Sigmoid colon (tissue), 7 donors: ENCODE measurements at regions of chr1 and their contacts with region 1.

Region 1: DNA sequence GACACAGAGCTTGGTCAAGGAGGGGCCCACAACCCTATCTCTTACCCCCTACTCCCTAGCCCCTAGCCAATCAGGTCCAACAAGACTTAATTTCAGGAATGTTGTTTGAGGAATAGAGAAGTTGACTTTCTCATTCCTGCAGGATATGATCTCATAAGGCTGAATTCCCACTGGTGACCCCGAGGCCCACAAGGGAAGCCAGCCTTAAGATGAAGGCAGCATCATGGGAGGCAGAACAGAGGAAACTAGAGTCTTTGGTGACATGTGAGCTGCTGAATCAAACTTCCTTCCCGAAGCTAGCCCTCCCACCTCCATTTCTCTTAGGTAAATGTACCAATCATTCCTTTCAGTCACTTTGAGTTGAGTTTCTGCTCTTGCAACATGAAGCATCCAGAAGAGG is 9.1 kb upstream of the PDIK1L start:
- DNase-seq: no peak
- H3K4me3 ChIP-seq: no peak overlapping the region
- H3K27ac ChIP-seq: no peak overlapping the region
- H3K4me1 ChIP-seq: no peaks in the 10 kb centered on the region
- H3K27me3 ChIP-seq: no peaks in the 10 kb centered on the region
- CTCF ChIP-seq: no peak
- EP300 ChIP-seq: no peak
- POLR2A ChIP-seq: no peak

Region 2: DNA sequence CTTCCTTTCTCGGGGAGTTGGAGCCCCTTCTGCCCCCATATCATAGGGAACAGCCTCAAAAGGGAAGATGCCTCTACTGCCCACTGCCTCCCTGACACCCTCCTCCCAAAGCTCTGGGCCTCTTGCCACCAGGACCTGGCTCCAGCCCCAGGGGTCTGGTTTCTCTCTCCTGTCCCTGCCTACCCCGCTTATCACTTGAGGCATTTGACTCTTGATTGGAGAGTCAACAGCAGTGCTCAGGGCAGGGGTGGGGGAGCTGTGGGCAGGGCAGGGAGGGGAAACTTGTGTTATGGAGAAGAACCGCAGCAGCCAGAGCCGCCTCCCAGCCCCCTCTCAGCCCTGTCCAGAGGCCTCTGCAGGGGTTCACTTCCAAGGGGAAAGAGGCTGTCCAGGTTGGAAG is 35.7 kb before region 1 on chr1:
- intact Hi-C with region 1: no loop called
- DNase-seq: no peak
- H3K4me3 ChIP-seq: no peak overlapping the region
- H3K27ac ChIP-seq: peak overlapping the region in 1 of 4 donors; percentile 12
- H3K4me1 ChIP-seq: peaks cover 0 to 17% (median 8%) of the 10 kb centered on the region in 4 donors
- H3K27me3 ChIP-seq: no peaks in the 10 kb centered on the region
- CTCF ChIP-seq: no peak
- EP300 ChIP-seq: no peak
- POLR2A ChIP-seq: no peak

Region 3: GRCh38 chr1:26145041-26145959 is 42.8 kb after region 1 on chr1:
- intact Hi-C with region 1: loop called (anchors 1 kb)
- DNase-seq: peak; percentile 89
- H3K4me3 ChIP-seq: no peak overlapping the region
- H3K27ac ChIP-seq: no peak overlapping the region
- H3K4me1 ChIP-seq: peaks cover 0 to 5% (median 0%) of the 10 kb centered on the region in 4 donors
- H3K27me3 ChIP-seq: no peaks in the 10 kb centered on the region
- CTCF ChIP-seq: peak; percentile 56 to 70 (median 68)
- EP300 ChIP-seq: no peak
- POLR2A ChIP-seq: no peak

Region 4: DNA sequence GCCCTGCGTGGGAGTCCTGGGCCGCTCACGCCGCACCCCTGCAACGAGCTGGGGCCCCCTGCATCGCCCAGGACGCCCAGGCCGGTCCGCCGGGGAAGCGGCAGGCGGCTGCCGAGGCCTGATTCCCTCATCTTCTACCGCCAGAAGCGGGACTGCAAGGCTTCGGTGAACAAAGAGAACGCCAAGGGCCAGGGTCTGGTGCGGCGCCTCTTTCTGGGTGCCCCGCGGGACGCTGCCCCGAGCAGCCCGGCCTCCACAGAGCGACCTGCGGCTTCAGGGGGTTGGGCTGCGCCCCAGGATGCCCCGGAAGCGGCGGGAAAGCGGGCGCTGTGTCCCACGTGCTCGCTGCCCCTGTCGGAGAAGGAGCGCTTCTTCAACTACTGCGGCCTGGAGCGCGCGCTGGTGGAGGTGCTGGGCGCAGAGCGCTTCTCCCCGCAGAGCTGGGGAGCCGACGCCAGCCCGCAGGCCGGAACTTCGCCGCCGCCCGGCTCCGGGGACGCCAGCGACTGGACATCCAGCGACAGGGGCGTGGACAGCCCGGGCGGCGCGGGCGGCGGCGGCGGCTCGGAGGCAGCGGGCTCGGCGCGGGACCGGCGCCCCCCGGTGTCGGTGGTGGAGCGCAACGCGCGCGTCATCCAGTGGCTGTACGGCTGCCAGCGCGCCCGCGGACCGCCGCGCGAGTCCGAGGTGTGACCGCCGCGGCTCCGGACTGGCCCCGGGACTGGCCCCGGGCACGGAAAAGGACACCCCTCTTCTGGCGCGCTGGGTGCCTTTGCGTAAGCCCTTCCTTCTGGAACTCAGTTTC is 59.1 kb after region 1 on chr1:
- intact Hi-C with region 1: loop called (anchors 1 kb)
- DNase-seq: no peak
- H3K4me3 ChIP-seq: peak overlapping the region; percentile 29 to 59 (median 54)
- H3K27ac ChIP-seq: peak overlapping the region; percentile 34 to 68 (median 50)
- H3K4me1 ChIP-seq: peaks cover 0 to 28% (median 19%) of the 10 kb centered on the region in 4 donors
- H3K27me3 ChIP-seq: peaks cover 4 to 16% (median 10%) of the 10 kb centered on the region in 3 donors
- CTCF ChIP-seq: no peak
- EP300 ChIP-seq: no peak
- POLR2A ChIP-seq: no peak